Testis (tissue), 5 donors: ENCODE measurements at regions of chr15 and their contacts with region 1.

Region 1: GRCh38 chr15:51649659-51650521 is 27.3 kb upstream of the DMXL2 start:
- DNase-seq: peak; percentile 49
- H3K4me3 ChIP-seq: no peak overlapping the region
- H3K27ac ChIP-seq: no peak overlapping the region
- H3K4me1 ChIP-seq: no peaks in the 10 kb centered on the region
- H3K27me3 ChIP-seq: no peaks in the 10 kb centered on the region
- CTCF ChIP-seq: peak; percentile 60 to 76 (median 64)
- POLR2A ChIP-seq: no peak

Region 2: GRCh38 chr15:51771773-51772172 is 121.9 kb after region 1 on chr15:
- intact Hi-C with region 1: loop called (anchors 5 kb)
- DNase-seq: no peak
- H3K4me3 ChIP-seq: no peak overlapping the region
- H3K27ac ChIP-seq: no peak overlapping the region
- H3K4me1 ChIP-seq: no peaks in the 10 kb centered on the region
- H3K27me3 ChIP-seq: no peaks in the 10 kb centered on the region
- CTCF ChIP-seq: no peak
- POLR2A ChIP-seq: no peak